Right ventricle myocardium superior (tissue), 1 donor: ENCODE measurements at regions of chr2 and their contacts with region 1.

Region 1: GRCh38 chr2:165698444-165698894 is 95.6 kb downstream of the GALNT3 start:
- DNase-seq: no peak
- ATAC-seq: peak; percentile 83

Region 2: GRCh38 chr2:165401285-165401852 is 297.1 kb before region 1 on chr2:
- intact Hi-C with region 1: loop called (anchors 5 kb)
- DNase-seq: no peak
- ATAC-seq: no peak

Region 3: GRCh38 chr2:165889158-165889557 is 190.7 kb after region 1 on chr2:
- intact Hi-C with region 1: no loop called
- DNase-seq: no peak
- ATAC-seq: peak; percentile 52